HEK293 (cell line): ENCODE measurements at regions of chr18 and their contacts with region 1.

Region 1: GRCh38 chr18:11654736-11655605 is 34.1 kb upstream of the GNAL start:
- H3K4me3 ChIP-seq: no peak overlapping the region
- H3K27ac ChIP-seq: no peak overlapping the region
- H3K4me1 ChIP-seq: no peaks in the 10 kb centered on the region
- CTCF ChIP-seq: peak; percentile 80

Region 2: GRCh38 chr18:11669271-11669947 is 14.4 kb after region 1 on chr18:
- CTCF ChIA-PET with region 1: interaction called, 30 read pairs
- POLR2A ChIA-PET with region 1: no interaction called
- H3K4me3 ChIP-seq: no peak overlapping the region
- H3K27ac ChIP-seq: no peak overlapping the region
- H3K4me1 ChIP-seq: no peaks in the 10 kb centered on the region; the same call in 1 of the 2 replicates
- CTCF ChIP-seq: no peak

Region 3: DNA sequence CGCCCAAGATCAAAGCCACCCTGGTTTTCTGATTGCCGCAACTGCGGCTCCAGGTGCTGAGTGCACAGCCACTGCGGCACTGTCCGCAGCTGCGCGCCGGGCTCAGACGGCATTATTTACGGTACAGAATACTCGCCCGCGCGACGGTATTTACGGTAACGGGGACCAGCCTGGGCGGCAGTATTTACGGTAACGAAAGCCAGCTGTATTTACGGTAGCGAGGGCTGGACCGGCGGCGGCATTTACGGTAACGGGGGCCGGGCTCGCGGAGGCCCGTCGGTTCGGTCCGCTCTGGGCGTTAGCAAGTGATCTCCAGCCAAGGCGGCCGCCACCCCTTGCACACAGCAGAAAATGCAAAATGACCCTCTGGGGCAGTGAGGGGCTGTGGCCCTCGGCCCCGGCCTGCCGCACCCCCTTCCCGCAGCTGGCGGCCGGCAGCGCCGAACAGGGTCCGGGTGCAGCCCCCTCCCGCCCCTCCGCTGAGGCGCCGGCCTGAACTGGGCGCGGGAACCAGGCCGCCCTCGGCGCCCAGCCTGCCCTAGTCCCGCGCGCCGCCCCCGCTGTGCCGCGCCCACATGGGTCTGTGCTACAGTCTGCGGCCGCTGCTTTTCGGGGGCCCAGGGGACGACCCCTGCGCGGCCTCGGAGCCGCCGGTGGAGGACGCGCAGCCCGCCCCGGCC is 34.2 kb after region 1 on chr18 and contains the start of gene GNAL:
- CTCF ChIA-PET with region 1: interaction called, 12 read pairs
- POLR2A ChIA-PET with region 1: interaction called, 3 read pairs
- H3K4me3 ChIP-seq: peak within 1 kb of the TSS; percentile 77
- H3K27ac ChIP-seq: peak within 1 kb of the TSS; percentile 95
- H3K4me1 ChIP-seq: peaks cover 4% of the 10 kb centered on the region; the same call in 1 of the 2 replicates
- CTCF ChIP-seq: peak; percentile 61

Region 4: GRCh38 chr18:11741505-11742145 is 86.7 kb after region 1 on chr18:
- CTCF ChIA-PET with region 1: interaction called, 38 read pairs
- POLR2A ChIA-PET with region 1: no interaction called
- H3K4me3 ChIP-seq: no peak overlapping the region
- H3K27ac ChIP-seq: no peak overlapping the region
- H3K4me1 ChIP-seq: no peaks in the 10 kb centered on the region
- CTCF ChIP-seq: no peak; the same call in 1 of the 2 replicates

Region 5: DNA sequence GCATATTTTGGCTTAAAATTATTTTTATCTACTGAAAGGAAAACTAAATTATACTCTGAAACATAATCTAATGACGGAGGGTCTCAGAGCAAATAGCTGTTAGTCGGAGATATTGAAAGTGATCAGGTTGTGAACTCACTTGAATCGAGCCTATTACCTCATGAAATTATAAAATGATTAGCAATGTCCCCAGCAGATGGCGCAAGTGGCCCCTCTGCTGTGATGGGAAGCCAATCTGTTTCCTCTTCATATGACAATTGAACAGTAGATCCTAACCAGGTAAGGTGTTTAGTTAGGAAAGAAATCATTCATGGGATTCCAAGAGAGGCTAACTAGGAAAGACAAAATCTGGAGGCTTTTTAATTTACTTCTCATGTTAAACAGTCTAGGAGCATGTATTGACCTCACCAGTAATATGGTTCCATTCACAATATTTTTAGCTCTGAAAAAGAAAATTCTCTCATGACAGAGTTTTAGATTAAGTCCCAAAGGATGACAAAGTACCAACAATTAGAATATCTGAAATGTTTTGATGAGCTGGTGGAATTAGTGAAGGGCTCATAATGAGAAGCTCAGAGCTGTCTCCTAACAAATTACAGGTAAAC is 283.0 kb after region 1 on chr18:
- CTCF ChIA-PET with region 1: interaction called, 24 read pairs
- POLR2A ChIA-PET with region 1: no interaction called
- H3K4me3 ChIP-seq: no peak overlapping the region
- H3K27ac ChIP-seq: no peak overlapping the region
- H3K4me1 ChIP-seq: no peaks in the 10 kb centered on the region
- CTCF ChIP-seq: no peak

Region 6: GRCh38 chr18:12038639-12039417 is 383.9 kb after region 1 on chr18:
- CTCF ChIA-PET with region 1: interaction called, 23 read pairs
- POLR2A ChIA-PET with region 1: no interaction called
- H3K4me3 ChIP-seq: peak overlapping the region; percentile 52
- H3K27ac ChIP-seq: no peak overlapping the region; the same call in 1 of the 2 replicates
- H3K4me1 ChIP-seq: no peaks in the 10 kb centered on the region; the same call in 1 of the 2 replicates
- CTCF ChIP-seq: peak; percentile 99